GM12878 (cell line): ENCODE measurements at regions of chrX and their contacts with region 1.

Region 1: GRCh38 chrX:15335135-15336022 is at the start of gene PIGA:
- DNase-seq: peak; percentile 82
- ATAC-seq: peak; percentile 98
- H3K4me3 ChIP-seq: peak within 1 kb of the TSS; percentile 76
- H3K27ac ChIP-seq: peak within 1 kb of the TSS; percentile 60
- H3K4me1 ChIP-seq: no peaks in the 10 kb centered on the region
- H3K27me3 ChIP-seq: no peaks in the 10 kb centered on the region
- CTCF ChIP-seq: no peak
- EP300 ChIP-seq: no peak
- POLR2A ChIP-seq: peak; percentile 88
- RAD21 ChIP-seq: no peak
- polyA plus RNA-seq, gene PIGA: 4.9 to 6.8 TPM

Region 2: GRCh38 chrX:15299941-15300851 is 35.2 kb before region 1 on chrX:
- CTCF ChIA-PET with region 1: interaction called, 19 read pairs
- POLR2A ChIA-PET with region 1: no interaction called
- RAD21 ChIA-PET with region 1: interaction called, 4 read pairs
- SMC1A ChIA-PET with region 1: interaction called, 3 read pairs
- in situ Hi-C with region 1: no loop called
- intact Hi-C with region 1: no loop called
- DNase-seq: no peak
- ATAC-seq: no peak; the same call in 2 of the 3 replicates
- H3K4me3 ChIP-seq: no peak overlapping the region
- H3K27ac ChIP-seq: no peak overlapping the region
- H3K4me1 ChIP-seq: no peaks in the 10 kb centered on the region
- H3K27me3 ChIP-seq: no peaks in the 10 kb centered on the region
- CTCF ChIP-seq: peak; percentile 39 to 40 (median 40); a peak in 4 of 6 replicates
- EP300 ChIP-seq: no peak
- POLR2A ChIP-seq: no peak
- RAD21 ChIP-seq: peak; percentile 32

Region 3: GRCh38 chrX:15564981-15565579 is 229.7 kb after region 1 on chrX:
- CTCF ChIA-PET with region 1: no interaction called
- POLR2A ChIA-PET with region 1: no interaction called
- RAD21 ChIA-PET with region 1: no interaction called
- SMC1A ChIA-PET with region 1: no interaction called
- in situ Hi-C with region 1: no loop called
- intact Hi-C with region 1: no loop called
- DNase-seq: peak; percentile 9
- ATAC-seq: peak; percentile 95
- H3K4me3 ChIP-seq: no peak overlapping the region
- H3K27ac ChIP-seq: no peak overlapping the region
- H3K4me1 ChIP-seq: no peaks in the 10 kb centered on the region
- H3K27me3 ChIP-seq: no peaks in the 10 kb centered on the region; a peak in 1 of 4 replicates
- CTCF ChIP-seq: peak; percentile 55 to 65 (median 57)
- EP300 ChIP-seq: no peak
- POLR2A ChIP-seq: no peak
- RAD21 ChIP-seq: peak; percentile 64